Activated CD8-positive, alpha-beta T cell treated with anti-CD3 and anti-CD28 coated beads, Interleukin-2, amount 10 ng/mL, durations not matched to agents 7 days and 5 days (primary cell): ENCODE measurements at regions of chr15 and their contacts with region 1.

Region 1: GRCh38 chr15:74906446-74907162 is at the start of gene FAM219B:
- DNase-seq: peak; percentile 88
- ATAC-seq: peak; percentile 89
- H3K4me3 Mint-ChIP-seq: peak within 1 kb of the TSS; percentile 92
- H3K27ac Mint-ChIP-seq: peak within 1 kb of the TSS; percentile 92
- H3K4me1 Mint-ChIP-seq: peaks cover 40% of the 10 kb centered on the region
- H3K27me3 Mint-ChIP-seq: no peaks in the 10 kb centered on the region
- total RNA-seq, gene FAM219B: 61.3 to 72.5 TPM

Region 2: GRCh38 chr15:74768771-74769342 is 137.7 kb before region 1 on chr15:
- CTCF ChIA-PET with region 1: interaction called, 103 read pairs
- POLR2A ChIA-PET with region 1: interaction called, 4 read pairs
- DNase-seq: peak; percentile 76
- ATAC-seq: peak; percentile 48
- H3K4me3 Mint-ChIP-seq: no peak overlapping the region
- H3K27ac Mint-ChIP-seq: peak overlapping the region; percentile 27
- H3K4me1 Mint-ChIP-seq: peaks cover 27% of the 10 kb centered on the region
- H3K27me3 Mint-ChIP-seq: no peaks in the 10 kb centered on the region

Region 3: GRCh38 chr15:74826364-74826819 is 80.2 kb before region 1 on chr15 and contains the start of gene CPLX3:
- CTCF ChIA-PET with region 1: interaction called, 11 read pairs
- POLR2A ChIA-PET with region 1: no interaction called
- DNase-seq: peak; percentile 67
- ATAC-seq: peak; percentile 66
- H3K4me3 Mint-ChIP-seq: no peak within 1 kb of the TSS
- H3K27ac Mint-ChIP-seq: no peak within 1 kb of the TSS
- H3K4me1 Mint-ChIP-seq: no peaks in the 10 kb centered on the region
- H3K27me3 Mint-ChIP-seq: peaks cover 23% of the 10 kb centered on the region
- total RNA-seq, gene CPLX3: not detected

Region 4: DNA sequence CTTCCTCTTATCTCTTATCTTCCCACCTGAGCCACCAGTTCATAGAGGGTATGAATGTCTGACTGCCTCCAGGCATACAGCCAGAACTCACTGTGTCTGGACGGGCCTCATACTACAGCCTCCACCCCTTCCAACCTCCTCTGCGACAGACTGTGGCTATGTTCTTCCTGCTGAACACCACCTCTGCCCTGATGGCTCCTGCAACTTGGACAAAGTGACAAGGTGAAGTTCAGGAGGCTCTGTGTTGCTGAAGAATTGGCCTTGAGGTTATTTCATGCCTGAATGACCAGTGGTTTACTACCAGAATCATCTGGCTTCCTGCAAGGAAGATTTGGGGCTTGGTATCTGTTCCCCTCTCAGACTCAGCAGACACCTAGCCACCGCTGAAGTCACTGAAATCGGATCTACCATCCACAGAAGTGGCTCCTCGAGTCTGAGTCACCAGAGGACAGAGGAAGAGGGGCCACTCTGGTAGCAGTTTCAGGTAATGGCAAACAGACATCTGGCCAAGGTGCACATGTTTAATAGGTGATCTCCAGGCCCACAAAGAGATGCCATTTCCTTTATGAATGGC is 49.4 kb before region 1 on chr15:
- CTCF ChIA-PET with region 1: interaction called, 55 read pairs
- POLR2A ChIA-PET with region 1: interaction called, 7 read pairs
- DNase-seq: no peak
- ATAC-seq: peak; percentile 38
- H3K4me3 Mint-ChIP-seq: no peak overlapping the region
- H3K27ac Mint-ChIP-seq: peak overlapping the region; percentile 87
- H3K4me1 Mint-ChIP-seq: peaks cover 41% of the 10 kb centered on the region
- H3K27me3 Mint-ChIP-seq: no peaks in the 10 kb centered on the region

Region 5: DNA sequence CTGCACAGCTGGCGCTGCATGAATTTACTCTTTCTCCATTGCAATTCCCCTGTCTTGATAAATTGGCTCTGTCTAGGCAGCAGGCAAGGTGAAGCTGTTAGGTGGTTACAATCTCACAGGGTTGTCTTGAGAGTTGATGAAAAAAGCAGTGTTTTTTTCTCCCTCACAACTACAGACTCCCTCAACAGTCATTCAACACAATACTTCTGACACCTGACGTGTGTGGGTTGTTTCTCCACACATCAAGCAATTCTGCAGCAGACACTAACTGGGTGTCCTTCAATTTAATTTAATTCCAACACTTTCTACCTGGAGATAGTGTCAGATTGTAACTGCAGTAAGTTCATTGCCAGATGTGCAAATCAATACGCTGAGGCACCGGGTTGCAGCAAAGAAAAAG is 28.3 kb before region 1 on chr15:
- CTCF ChIA-PET with region 1: interaction called, 41 read pairs
- POLR2A ChIA-PET with region 1: interaction called, 4 read pairs
- DNase-seq: no peak
- ATAC-seq: no peak
- H3K4me3 Mint-ChIP-seq: no peak overlapping the region
- H3K27ac Mint-ChIP-seq: no peak overlapping the region
- H3K4me1 Mint-ChIP-seq: peaks cover 8% of the 10 kb centered on the region
- H3K27me3 Mint-ChIP-seq: peaks cover 10% of the 10 kb centered on the region

Region 6: GRCh38 chr15:74937596-74938296 is 31.1 kb after region 1 on chr15 and contains the start of gene COX5A:
- CTCF ChIA-PET with region 1: interaction called, 12 read pairs
- POLR2A ChIA-PET with region 1: interaction called, 7 read pairs
- DNase-seq: peak; percentile 95
- ATAC-seq: peak; percentile 97
- H3K4me3 Mint-ChIP-seq: peak within 1 kb of the TSS; percentile 91
- H3K27ac Mint-ChIP-seq: peak within 1 kb of the TSS; percentile 92
- H3K4me1 Mint-ChIP-seq: peaks cover 41% of the 10 kb centered on the region
- H3K27me3 Mint-ChIP-seq: peaks cover 2% of the 10 kb centered on the region
- total RNA-seq, gene COX5A: 305 to 313 TPM